Dorsolateral prefrontal cortex (tissue), 120 donors: ENCODE measurements at regions of chr17 and their contacts with region 1.

Region 1: GRCh38 chr17:17141860-17142552 is 64.1 kb downstream of the PLD6 start:
- DNase-seq: peak; percentile 67 to 86 (median 77)
- H3K4me3 ChIP-seq: peak overlapping the region in 2 of 59 donors; percentile 3 to 4
- H3K27ac ChIP-seq: peak overlapping the region in 58 of 59 donors; percentile 21 to 90 (median 77)
- H3K27me3 ChIP-seq: no peaks in the 10 kb centered on the region
- CTCF ChIP-seq: peak; percentile 78 to 99 (median 92)

Region 2: DNA sequence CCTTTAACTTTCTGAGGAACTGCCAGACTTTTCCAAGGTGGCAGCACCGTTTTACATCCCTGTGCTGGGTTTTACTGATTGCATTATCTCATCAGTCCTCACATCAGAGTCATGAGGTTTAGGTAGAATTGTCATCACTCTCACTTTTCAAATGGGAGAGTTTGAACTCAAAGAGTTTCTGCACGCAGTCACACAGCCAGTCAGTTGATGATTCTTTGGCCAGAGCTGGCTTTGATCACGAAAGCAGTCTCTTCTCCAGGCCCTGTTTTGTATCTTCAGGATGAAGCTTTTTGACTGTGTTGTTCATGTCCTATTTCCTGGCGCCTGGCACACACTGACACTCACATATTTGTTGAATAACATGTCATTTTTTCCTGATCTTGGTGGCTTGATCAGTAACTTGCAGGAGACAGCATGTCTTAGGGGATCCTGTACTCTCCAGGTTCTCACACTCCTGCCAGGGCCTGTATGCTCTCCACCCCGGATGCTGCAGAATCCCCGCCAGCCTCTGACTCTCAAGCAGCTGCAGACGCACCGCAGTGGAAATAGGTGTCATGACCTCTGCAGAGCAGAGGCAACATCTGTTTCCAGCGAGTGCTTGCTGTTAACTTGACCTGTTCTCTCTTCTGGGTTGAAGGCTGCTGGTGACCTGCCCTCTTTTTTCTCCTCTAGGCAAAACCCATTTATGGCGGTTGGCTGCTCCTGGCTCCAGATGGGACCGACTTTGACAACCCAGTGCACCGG is 66.8 kb before region 1 on chr17:
- intact Hi-C with region 1: loop called in 1 of 2 experiments (anchors 10 kb)
- DNase-seq: peak in 4 of 10 donors; percentile 16 to 40 (median 28)
- H3K4me3 ChIP-seq: no peak overlapping the region
- H3K27ac ChIP-seq: peak overlapping the region in 47 of 59 donors; percentile 1 to 77 (median 44)
- H3K27me3 ChIP-seq: no peaks in the 10 kb centered on the region
- CTCF ChIP-seq: no peak

Region 3: GRCh38 chr17:17200831-17201230 is 58.8 kb after region 1 on chr17:
- intact Hi-C with region 1: no loop called
- DNase-seq: no peak
- H3K4me3 ChIP-seq: no peak overlapping the region
- H3K27ac ChIP-seq: peak overlapping the region in 1 of 59 donors; percentile 29
- H3K27me3 ChIP-seq: no peaks in the 10 kb centered on the region
- CTCF ChIP-seq: no peak

Region 4: GRCh38 chr17:17303010-17303846 is 161.2 kb after region 1 on chr17 and contains the start of gene NT5M:
- intact Hi-C with region 1: loop called (anchors 10 kb)
- DNase-seq: peak; percentile 60 to 86 (median 82)
- H3K4me3 ChIP-seq: peak within 1 kb of the TSS; percentile 47 to 82 (median 70)
- H3K27ac ChIP-seq: peak within 1 kb of the TSS in 51 of 59 donors; percentile 3 to 84 (median 67)
- H3K27me3 ChIP-seq: no peaks in the 10 kb centered on the region
- CTCF ChIP-seq: peak in 4 of 56 donors; percentile 4 to 13 (median 9)
- total RNA-seq, gene NT5M: 7.4 to 19.5 (median 13.0) TPM